ENCODE measurements at regions of chr18 and their contacts with region 1.

Region 1: DNA sequence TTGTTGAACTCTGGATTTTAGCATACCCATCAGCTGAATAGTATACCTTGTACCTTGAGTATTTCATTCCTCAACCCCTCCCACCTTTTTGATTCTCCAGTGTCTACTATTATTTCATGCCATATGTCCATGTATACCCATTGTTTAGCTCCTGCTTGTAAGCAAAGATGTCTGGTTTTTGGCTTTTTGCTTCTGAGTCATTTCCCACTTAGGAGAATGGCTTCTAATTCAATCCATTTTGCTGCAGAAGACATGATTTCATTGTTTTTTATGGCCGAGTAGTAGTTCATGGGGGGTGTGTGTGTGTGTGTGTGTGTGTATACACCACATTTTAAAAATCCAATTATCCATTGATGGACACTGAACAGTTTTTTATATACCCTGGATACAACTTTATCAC is 24.3 kb upstream of the MOCOS start:
- DNase-seq: no peak
- ATAC-seq: no peak

Region 2: GRCh38 chr18:36047521-36047920 is 115.5 kb before region 1 on chr18:
- intact Hi-C with region 1: no loop called
- DNase-seq: no peak
- ATAC-seq: no peak

Region 3: GRCh38 chr18:36255072-36255698 is 92.2 kb after region 1 on chr18:
- intact Hi-C with region 1: loop called (anchors 10 kb)
- DNase-seq: no peak
- ATAC-seq: no peak

Measured in Right ventricle myocardium superior (tissue), 1 donor.